ENCODE measurements at regions of chr12 and their contacts with region 1.

Region 1: DNA sequence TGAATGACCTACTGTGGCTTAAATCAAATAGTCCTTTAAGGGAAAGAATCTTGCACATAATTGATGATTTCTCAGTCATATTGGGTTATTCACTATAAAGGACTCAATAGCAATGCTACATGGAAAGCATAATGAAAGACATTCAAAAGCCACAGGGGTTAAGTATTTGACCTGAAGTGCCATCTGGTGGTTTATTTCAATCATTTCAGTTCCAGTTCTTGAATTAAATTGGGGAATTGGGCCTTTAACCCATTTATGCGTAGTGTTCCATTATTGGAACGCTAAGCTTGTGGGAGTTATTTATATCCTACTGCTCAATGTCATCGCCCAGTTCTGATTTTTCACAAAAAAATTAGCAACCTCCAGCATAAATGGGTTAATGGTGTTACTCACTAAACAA is 41.3 kb upstream of the C12orf71 start:
- DNase-seq: no peak
- ATAC-seq: no peak
- H3K4me3 ChIP-seq: no peak overlapping the region
- H3K27ac ChIP-seq: no peak overlapping the region
- H3K4me1 ChIP-seq: peaks cover under 1% of the 10 kb centered on the region; the same call in 1 of the 2 replicates
- H3K27me3 ChIP-seq: no peaks in the 10 kb centered on the region
- CTCF ChIP-seq: no peak
- POLR2A ChIP-seq: no peak
- RAD21 ChIP-seq: no peak

Region 2: DNA sequence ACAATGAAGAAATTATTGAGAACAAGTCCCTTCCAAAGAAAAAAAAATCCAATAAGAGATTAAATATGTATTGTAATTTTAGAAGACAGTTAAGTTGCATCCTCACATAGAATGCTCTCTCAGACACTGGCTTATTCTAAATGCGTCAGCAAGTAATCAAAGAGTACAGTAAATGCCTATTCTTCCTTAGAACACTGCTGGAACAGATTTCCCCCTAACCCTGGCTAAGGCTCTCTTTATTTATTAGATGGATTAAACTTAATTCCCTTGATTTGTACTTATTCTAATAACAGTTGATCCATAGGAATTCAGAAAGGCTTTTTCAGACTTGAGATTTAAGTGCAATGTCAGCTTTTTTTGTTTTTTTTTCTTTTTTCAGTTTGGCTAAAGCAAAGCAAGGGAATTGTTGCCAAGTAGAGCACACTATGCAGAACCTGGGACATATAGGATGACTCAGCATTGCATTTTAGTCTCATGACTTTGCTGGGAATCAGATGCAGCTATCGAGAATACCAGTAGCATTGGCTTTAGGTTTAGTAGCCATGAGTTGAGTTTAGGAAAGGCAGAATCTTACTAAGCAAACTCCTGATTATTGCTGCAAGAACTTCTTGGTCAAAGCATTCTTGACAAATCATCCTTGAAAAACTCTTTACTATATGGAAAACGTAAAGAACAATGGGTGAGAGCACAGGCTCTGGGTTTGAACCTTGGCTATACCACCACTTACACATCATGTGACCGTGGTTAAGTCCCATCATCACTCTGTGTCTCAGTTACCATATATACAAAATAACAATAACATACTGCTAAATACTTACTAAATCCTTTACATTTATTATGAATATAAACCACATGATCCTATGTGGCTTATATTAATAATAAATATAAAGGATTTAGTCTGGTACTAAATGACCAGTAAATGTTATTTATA is 74.6 kb before region 1 on chr12:
- CTCF ChIA-PET with region 1: no interaction called
- POLR2A ChIA-PET with region 1: no interaction called
- dilution Hi-C with region 1: no loop called
- in situ Hi-C with region 1: no loop called
- intact Hi-C with region 1: no loop called
- DNase-seq: peak; percentile 91
- ATAC-seq: peak; percentile 86
- H3K4me3 ChIP-seq: no peak overlapping the region
- H3K27ac ChIP-seq: peak overlapping the region; percentile 20; the same call in 1 of the 2 replicates
- H3K4me1 ChIP-seq: peaks cover 2% of the 10 kb centered on the region; the same call in 1 of the 2 replicates
- H3K27me3 ChIP-seq: no peaks in the 10 kb centered on the region
- CTCF ChIP-seq: no peak
- POLR2A ChIP-seq: no peak
- RAD21 ChIP-seq: no peak

Region 3: GRCh38 chr12:27064397-27065342 is 59.0 kb before region 1 on chr12:
- CTCF ChIA-PET with region 1: no interaction called
- POLR2A ChIA-PET with region 1: no interaction called
- dilution Hi-C with region 1: no loop called
- in situ Hi-C with region 1: no loop called
- intact Hi-C with region 1: loop called (anchors 10 kb)
- DNase-seq: no peak
- ATAC-seq: no peak
- H3K4me3 ChIP-seq: no peak overlapping the region
- H3K27ac ChIP-seq: no peak overlapping the region
- H3K4me1 ChIP-seq: no peaks in the 10 kb centered on the region
- H3K27me3 ChIP-seq: no peaks in the 10 kb centered on the region
- CTCF ChIP-seq: no peak
- POLR2A ChIP-seq: no peak
- RAD21 ChIP-seq: no peak